Gastrocnemius medialis (tissue), 4 donors: ENCODE measurements at regions of chr17 and their contacts with region 1.

Region 1: GRCh38 chr17:29369831-29370735 is 20.1 kb upstream of the TAOK1 start:
- DNase-seq: peak; percentile 6 to 22
- ATAC-seq: peak; percentile 93 to 97
- H3K4me3 ChIP-seq: peak overlapping the region in 1 of 4 donors; percentile 27
- H3K27ac ChIP-seq: no peak overlapping the region
- H3K4me1 ChIP-seq: no peaks in the 10 kb centered on the region
- H3K27me3 ChIP-seq: no peaks in the 10 kb centered on the region
- CTCF ChIP-seq: peak; percentile 72 to 83 (median 78)
- POLR2A ChIP-seq: no peak

Region 2: DNA sequence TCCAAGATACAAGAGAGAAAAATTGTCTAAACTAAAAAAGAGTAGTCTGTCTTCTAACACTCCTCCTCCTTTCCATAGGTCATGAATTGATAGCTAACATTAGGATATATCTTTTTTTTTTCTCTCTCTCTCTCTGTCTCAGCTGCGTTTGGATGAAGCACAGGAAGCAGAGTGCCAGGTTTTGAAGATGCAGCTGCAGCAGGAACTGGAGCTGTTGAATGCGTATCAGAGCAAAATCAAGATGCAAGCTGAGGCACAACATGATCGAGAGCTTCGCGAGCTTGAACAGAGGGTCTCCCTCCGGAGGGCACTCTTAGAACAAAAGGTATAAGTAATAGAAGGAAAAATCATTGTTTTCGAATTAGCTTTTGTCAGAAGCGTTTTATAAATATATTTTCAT is 163.9 kb after region 1 on chr17:
- in situ Hi-C with region 1: loop called (anchors 5 kb)
- intact Hi-C with region 1: loop called (anchors 1 kb)
- DNase-seq: no peak
- ATAC-seq: no peak
- H3K4me3 ChIP-seq: no peak overlapping the region
- H3K27ac ChIP-seq: no peak overlapping the region
- H3K4me1 ChIP-seq: no peaks in the 10 kb centered on the region
- H3K27me3 ChIP-seq: no peaks in the 10 kb centered on the region
- CTCF ChIP-seq: no peak
- POLR2A ChIP-seq: no peak

Region 3: GRCh38 chr17:29789196-29790170 is 419.4 kb after region 1 on chr17:
- in situ Hi-C with region 1: loop called in 2 of 4 experiments (anchors 25 kb)
- intact Hi-C with region 1: no loop called
- DNase-seq: no peak
- ATAC-seq: peak in 1 of 2 donors; percentile 34
- H3K4me3 ChIP-seq: no peak overlapping the region
- H3K27ac ChIP-seq: no peak overlapping the region
- H3K4me1 ChIP-seq: peaks cover 0 to 13% of the 10 kb centered on the region in 2 donors
- H3K27me3 ChIP-seq: no peaks in the 10 kb centered on the region
- CTCF ChIP-seq: no peak
- POLR2A ChIP-seq: no peak

Region 4: GRCh38 chr17:29807520-29808351 is 437.7 kb after region 1 on chr17:
- in situ Hi-C with region 1: loop called in 1 of 4 experiments (anchors 25 kb)
- intact Hi-C with region 1: no loop called
- DNase-seq: peak; percentile 36 to 39
- ATAC-seq: peak; percentile 73 to 85
- H3K4me3 ChIP-seq: no peak overlapping the region
- H3K27ac ChIP-seq: no peak overlapping the region
- H3K4me1 ChIP-seq: no peaks in the 10 kb centered on the region
- H3K27me3 ChIP-seq: no peaks in the 10 kb centered on the region
- CTCF ChIP-seq: peak; percentile 58 to 74 (median 71)
- POLR2A ChIP-seq: no peak